ENCODE measurements at regions of chr3 and their contacts with region 1.

Region 1: GRCh38 chr3:51498876-51499738 is 708 bp downstream of the DCAF1 start:
- DNase-seq: peak; percentile 44 to 85 (median 59)
- ATAC-seq: peak; percentile 60 to 68 (median 62)
- H3K4me3 ChIP-seq: peak overlapping the region; percentile 72 to 96
- H3K4me3 Mint-ChIP-seq: peak overlapping the region; percentile 86 to 97 (median 94)
- H3K27ac ChIP-seq: peak overlapping the region; percentile 77
- H3K27ac Mint-ChIP-seq: peak overlapping the region; percentile 97 to 98
- H3K4me1 ChIP-seq: peaks cover 6 to 27% of the 10 kb centered on the region in 2 experiments
- H3K4me1 Mint-ChIP-seq: peaks cover 19 to 37% (median 29%) of the 10 kb centered on the region in 3 donors
- H3K27me3 ChIP-seq: no peaks in the 10 kb centered on the region
- H3K27me3 Mint-ChIP-seq: no peaks in the 10 kb centered on the region

Region 2: DNA sequence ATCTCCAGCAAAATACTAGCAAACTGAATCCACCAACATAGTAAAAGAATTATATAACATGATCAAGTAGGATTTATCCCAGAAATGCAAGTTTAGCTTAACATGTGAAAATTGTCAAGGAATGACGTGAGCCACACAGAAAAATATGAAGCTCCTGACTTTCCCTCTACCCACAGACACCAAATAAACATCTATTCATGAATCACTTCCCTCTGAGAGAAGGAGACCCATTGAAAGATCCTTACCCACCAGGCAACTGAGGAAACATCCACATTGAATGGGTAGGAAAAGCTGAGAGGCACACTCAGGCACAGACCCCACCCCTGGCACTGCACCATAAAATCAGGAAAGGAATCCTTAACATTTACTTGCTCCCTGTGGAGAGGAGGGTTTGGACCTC is 216.2 kb before region 1 on chr3:
- CTCF ChIA-PET with region 1: no interaction called
- POLR2A ChIA-PET with region 1: interaction called in 1 of 2 experiments, 16 read pairs
- DNase-seq: no peak
- ATAC-seq: no peak
- H3K4me3 ChIP-seq: no peak overlapping the region
- H3K4me3 Mint-ChIP-seq: no peak overlapping the region
- H3K27ac ChIP-seq: no peak overlapping the region
- H3K27ac Mint-ChIP-seq: no peak overlapping the region
- H3K4me1 ChIP-seq: no peaks in the 10 kb centered on the region
- H3K4me1 Mint-ChIP-seq: no peaks in the 10 kb centered on the region
- H3K27me3 ChIP-seq: no peaks in the 10 kb centered on the region
- H3K27me3 Mint-ChIP-seq: peaks cover 0 to 5% of the 10 kb centered on the region in 2 donors

Region 3: DNA sequence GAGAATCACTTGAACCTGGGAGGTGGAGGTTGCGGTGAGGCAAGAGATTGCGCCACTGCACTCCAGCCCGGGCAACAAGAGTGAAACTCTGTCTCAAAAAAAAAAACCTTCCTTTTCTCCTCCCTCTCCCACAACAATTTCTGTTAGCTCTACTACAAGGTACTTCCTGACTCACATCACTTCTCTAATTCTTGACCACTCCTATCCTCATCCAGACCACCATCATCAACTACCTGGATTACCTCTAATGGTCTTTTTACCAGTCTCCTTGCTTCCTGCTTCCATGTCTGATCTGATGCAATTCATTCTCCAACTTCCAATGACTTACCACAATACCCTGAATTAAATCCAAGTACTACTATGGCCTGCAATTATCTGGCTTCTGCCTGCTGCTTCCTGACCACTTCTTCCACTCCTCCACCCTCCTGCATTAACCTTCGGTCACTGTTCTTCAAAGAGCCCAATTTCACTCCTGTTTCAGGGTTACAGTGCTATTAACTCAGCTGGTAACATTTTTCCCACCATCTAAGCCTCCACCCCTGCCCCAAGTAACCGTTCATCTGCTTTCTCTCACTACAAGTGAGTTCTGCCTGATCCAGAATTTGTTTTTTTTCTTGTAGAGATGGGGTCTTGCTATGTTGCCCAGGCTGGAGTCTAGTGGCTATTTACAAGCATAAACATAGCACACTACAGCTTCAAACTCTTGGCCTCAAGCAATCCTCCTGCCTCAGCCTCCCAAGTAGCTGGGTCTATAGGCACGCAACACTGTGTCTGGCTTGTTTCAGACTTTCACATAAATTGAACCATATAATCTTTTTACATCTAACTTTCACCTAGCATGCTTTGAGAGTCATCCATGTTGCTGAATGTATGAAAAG is 27.1 kb before region 1 on chr3:
- CTCF ChIA-PET with region 1: no interaction called
- POLR2A ChIA-PET with region 1: no interaction called
- DNase-seq: no peak
- ATAC-seq: no peak
- H3K4me3 ChIP-seq: no peak overlapping the region
- H3K4me3 Mint-ChIP-seq: no peak overlapping the region
- H3K27ac ChIP-seq: no peak overlapping the region
- H3K27ac Mint-ChIP-seq: no peak overlapping the region
- H3K4me1 ChIP-seq: no peaks in the 10 kb centered on the region
- H3K4me1 Mint-ChIP-seq: peaks cover 0 to 5% (median 0%) of the 10 kb centered on the region in 3 donors
- H3K27me3 ChIP-seq: no peaks in the 10 kb centered on the region
- H3K27me3 Mint-ChIP-seq: no peaks in the 10 kb centered on the region

Region 4: GRCh38 chr3:51511000-51511399 is 11.9 kb after region 1 on chr3:
- CTCF ChIA-PET with region 1: interaction called in 1 of 2 experiments, 3 read pairs
- POLR2A ChIA-PET with region 1: interaction called in 1 of 2 experiments, 13 read pairs
- DNase-seq: no peak
- ATAC-seq: no peak
- H3K4me3 ChIP-seq: no peak overlapping the region
- H3K4me3 Mint-ChIP-seq: no peak overlapping the region
- H3K27ac ChIP-seq: no peak overlapping the region
- H3K27ac Mint-ChIP-seq: no peak overlapping the region
- H3K4me1 ChIP-seq: peaks cover 0 to 5% of the 10 kb centered on the region in 2 experiments
- H3K4me1 Mint-ChIP-seq: peaks cover 0 to 15% (median 8%) of the 10 kb centered on the region in 3 donors
- H3K27me3 ChIP-seq: no peaks in the 10 kb centered on the region
- H3K27me3 Mint-ChIP-seq: no peaks in the 10 kb centered on the region

Region 5: DNA sequence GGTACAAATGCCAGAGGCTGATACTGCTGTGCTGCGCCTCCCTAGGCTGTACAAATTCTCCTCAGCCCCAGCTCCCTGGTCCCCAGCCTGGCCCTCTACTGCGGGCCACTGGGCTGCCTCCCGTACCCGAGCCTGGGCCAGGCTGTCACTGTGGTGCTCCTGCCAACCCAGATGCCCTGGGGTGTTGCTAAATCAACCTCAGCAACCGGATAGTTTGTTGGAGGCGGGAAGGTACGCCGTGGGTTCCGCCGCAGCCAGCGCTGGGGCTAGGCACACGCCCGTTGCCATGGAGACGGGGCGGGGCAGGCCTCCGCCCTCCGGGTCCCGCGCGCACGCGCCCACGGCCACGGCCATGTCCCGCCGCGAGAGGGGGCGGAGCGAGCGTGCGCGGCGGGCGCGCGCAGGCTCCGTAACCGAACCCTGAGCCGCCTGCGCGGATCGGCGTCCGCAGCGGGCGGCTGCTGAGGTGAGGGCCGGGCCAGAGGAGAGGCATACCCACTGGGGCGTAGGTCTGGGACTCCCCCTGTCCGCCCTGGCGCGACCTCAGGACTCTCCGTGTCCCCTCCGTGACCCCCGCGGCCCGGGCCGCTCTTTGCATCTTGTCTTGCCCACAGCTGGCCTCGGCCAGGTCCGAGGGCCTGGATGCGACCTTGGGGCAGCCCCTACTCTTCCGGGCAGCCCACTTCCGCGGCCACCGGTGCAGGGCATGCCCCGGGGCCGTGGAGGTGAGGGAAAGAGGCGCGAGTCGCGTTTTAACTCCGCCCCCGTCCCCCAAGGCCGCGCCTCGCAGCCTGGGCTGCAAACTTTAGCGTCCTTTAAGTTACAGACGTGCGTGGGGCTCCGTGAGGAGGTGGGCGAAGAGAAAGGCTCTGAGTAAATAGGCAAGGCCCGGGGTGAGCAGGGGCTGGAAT is 172.0 kb after region 1 on chr3 and contains the start of gene TEX264:
- CTCF ChIA-PET with region 1: interaction called, 6 to 28 read pairs
- POLR2A ChIA-PET with region 1: interaction called in 1 of 2 experiments, 6 read pairs
- DNase-seq: peak; percentile 87 to 99 (median 93)
- ATAC-seq: peak; percentile 80 to 85 (median 82)
- H3K4me3 ChIP-seq: peak within 1 kb of the TSS; percentile 75 to 89
- H3K4me3 Mint-ChIP-seq: peak within 1 kb of the TSS; percentile 83 to 92 (median 88)
- H3K27ac ChIP-seq: peak within 1 kb of the TSS; percentile 81
- H3K27ac Mint-ChIP-seq: peak within 1 kb of the TSS; percentile 92 to 93
- H3K4me1 ChIP-seq: peaks cover 20 to 66% of the 10 kb centered on the region in 2 experiments
- H3K4me1 Mint-ChIP-seq: peaks cover 65 to 69% (median 68%) of the 10 kb centered on the region in 3 donors
- H3K27me3 ChIP-seq: no peaks in the 10 kb centered on the region
- H3K27me3 Mint-ChIP-seq: no peaks in the 10 kb centered on the region
- total RNA-seq, gene TEX264: 35.9 to 51.0 (median 47.0) TPM

Region 6: DNA sequence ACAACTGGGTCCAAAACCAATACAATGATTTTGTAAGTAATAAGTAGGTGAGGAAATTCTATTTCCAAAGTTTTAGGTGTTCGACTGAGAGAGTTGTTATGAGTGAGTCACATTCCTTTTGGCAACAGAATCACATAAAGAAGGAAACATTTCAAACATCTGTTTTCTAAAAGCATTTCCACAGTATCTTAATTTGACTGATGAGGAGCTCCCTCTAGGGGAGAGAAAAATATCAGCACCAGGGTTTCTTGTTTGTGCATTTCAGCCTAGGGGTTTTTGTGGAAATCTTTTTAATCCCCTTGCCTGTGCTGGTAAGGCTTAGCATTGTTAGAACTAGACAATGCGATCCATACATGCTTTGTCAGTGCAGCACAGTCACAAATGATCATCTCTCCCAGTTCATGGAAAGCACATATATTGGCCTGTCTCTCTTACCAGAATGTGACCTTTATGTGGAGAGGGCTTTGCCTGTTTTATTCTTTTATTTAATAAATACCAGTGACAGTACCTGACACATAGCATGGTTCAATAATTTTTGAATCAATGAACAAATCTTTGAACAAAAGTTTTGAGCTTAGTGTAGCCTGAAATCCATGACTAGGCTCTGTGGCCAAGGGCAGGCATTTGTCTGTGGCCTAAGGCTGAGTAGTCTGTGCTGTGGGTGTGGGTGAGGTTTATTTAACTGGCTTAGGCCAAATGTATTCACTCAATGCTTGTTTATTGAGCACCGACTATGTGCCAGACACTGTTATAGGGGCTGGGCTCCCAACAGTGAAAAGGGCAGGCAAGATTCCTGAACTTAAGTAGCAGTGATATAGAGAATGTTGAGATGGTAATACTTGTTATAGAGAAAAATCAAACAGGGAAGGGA is 301.0 kb after region 1 on chr3:
- CTCF ChIA-PET with region 1: interaction called, 4 to 34 read pairs
- POLR2A ChIA-PET with region 1: no interaction called
- DNase-seq: peak in 9 of 35 experiments; percentile 3 to 71 (median 21)
- ATAC-seq: peak; percentile 39 to 53 (median 46)
- H3K4me3 ChIP-seq: no peak overlapping the region
- H3K4me3 Mint-ChIP-seq: no peak overlapping the region
- H3K27ac ChIP-seq: no peak overlapping the region
- H3K27ac Mint-ChIP-seq: no peak overlapping the region
- H3K4me1 ChIP-seq: no peaks in the 10 kb centered on the region
- H3K4me1 Mint-ChIP-seq: peaks cover 0 to 24% (median 15%) of the 10 kb centered on the region in 3 donors
- H3K27me3 ChIP-seq: no peaks in the 10 kb centered on the region
- H3K27me3 Mint-ChIP-seq: peaks cover 11 to 24% of the 10 kb centered on the region in 2 donors